ENCODE measurements at regions of chr19 and their contacts with region 1.

Region 1: GRCh38 chr19:51016798-51017683 is 2.5 kb downstream of the KLK10 start:
- H3K4me3 ChIP-seq: peak overlapping the region; percentile 48
- H3K27ac ChIP-seq: no peak overlapping the region
- H3K4me1 ChIP-seq: no peaks in the 10 kb centered on the region; the same call in 1 of the 2 replicates
- CTCF ChIP-seq: peak; percentile 96

Region 2: DNA sequence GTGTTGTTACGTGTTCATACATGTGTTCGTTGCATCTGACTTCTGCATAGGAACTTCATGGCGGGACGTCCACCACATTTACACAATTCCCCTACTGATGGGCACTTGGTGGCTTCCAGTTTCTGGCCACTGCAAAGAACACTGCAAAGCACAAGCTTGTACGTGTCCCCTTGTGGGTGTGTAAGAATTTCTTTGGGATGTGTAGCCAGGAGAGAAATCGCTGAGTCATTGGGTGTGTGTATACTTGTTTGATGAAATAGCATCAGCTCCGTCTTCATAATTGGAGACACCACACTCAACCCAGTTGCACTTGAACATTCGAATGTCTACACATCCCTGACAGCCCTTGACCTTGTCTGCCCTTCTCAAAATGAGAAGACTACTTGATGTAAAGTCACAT is 83.4 kb before region 1 on chr19:
- CTCF ChIA-PET with region 1: interaction called, 28 read pairs
- POLR2A ChIA-PET with region 1: interaction called, 5 read pairs
- H3K4me3 ChIP-seq: no peak overlapping the region
- H3K27ac ChIP-seq: no peak overlapping the region
- H3K4me1 ChIP-seq: no peaks in the 10 kb centered on the region
- CTCF ChIP-seq: no peak

Region 3: DNA sequence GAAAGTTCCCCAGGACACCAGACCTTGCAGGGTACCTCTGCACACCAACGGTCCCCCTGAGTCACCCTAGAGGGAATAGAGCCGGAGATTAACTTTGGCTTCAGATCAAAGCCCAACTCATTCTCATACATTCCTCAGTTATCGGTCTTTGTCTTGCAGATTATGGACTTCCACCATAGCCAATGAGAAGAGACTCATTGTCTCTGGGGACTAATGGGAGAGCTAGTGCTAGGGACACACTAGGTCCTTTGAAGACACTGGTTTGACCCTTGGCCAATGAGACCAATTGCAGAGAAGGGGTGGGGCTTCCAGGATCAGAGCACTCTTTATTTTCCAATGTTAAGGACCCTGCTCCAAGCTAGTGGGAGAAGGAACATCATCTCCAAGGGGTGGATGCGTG is 39.4 kb before region 1 on chr19:
- CTCF ChIA-PET with region 1: interaction called, 10 read pairs
- POLR2A ChIA-PET with region 1: no interaction called
- H3K4me3 ChIP-seq: no peak overlapping the region
- H3K27ac ChIP-seq: no peak overlapping the region
- H3K4me1 ChIP-seq: no peaks in the 10 kb centered on the region
- CTCF ChIP-seq: no peak

Region 4: DNA sequence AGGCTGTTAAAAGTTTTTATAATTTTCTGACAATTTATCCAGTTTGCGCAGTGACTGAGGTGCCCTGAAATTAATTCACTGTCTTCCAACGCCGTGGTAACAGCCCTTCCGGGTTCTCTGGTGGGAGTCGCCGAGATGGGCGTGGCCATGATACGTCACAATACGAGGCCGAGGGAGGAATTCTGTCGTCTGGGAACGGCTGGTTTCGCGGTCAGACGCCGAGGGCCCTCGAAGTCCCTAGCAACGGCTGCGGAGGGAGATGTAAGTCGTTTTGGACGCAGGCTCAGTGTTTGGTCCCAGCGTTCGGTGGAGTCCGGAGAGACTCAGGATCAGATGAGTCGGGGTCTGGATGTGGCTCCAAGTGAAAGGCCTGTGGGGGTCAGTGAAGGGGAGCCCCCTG is 931.9 kb after region 1 on chr19:
- CTCF ChIA-PET with region 1: no interaction called
- POLR2A ChIA-PET with region 1: no interaction called
- H3K4me3 ChIP-seq: no peak overlapping the region
- H3K27ac ChIP-seq: no peak overlapping the region
- H3K4me1 ChIP-seq: no peaks in the 10 kb centered on the region
- CTCF ChIP-seq: no peak

Measured in HEK293 (cell line).